Common myeloid progenitor, CD34-positive (primary cell): ENCODE measurements at regions of chr9 and their contacts with region 1.

Region 1: DNA sequence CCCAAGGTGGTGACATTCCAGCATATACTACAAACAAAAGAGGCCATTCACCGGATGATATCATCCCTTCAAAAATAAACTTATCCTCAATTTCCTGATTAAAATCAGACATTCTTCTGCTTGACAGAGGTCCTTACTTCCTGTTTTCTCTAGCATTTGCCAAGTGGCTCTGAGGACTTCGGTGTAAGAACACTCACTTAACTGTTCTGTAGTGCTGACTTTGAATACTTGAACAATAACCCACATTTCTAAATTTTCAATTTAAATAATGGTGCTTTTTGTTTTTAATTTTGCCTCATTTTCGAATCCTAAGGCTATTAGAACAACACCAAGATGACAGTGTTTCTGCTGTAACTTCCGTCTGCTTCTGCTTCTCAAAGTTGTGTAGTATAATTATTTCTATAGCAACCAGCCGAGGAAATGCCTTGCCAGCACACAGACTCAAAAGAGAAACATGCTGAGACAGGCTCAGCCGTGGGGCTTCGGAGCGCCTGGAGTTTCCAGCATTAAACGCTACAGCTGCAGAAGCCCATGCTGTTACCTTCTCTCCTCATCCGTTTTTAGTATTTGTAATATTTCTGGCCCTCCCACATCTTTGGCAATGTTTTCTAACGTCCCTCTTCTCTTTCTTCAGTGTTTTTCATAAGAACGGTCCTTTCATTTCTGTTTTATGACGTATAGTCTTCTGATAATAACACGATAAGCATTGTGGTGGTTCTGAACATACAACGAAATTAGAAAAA is 19.5 kb upstream of the ANXA1 start:
- DNase-seq: peak; percentile 88 to 96 (median 94)
- H3K4me3 ChIP-seq: peak overlapping the region in 6 of 7 experiments; percentile 72 to 90 (median 78)
- H3K27ac ChIP-seq: peak overlapping the region; percentile 98 to 99
- H3K4me1 ChIP-seq: peaks cover 6 to 18% (median 15%) of the 10 kb centered on the region in 4 experiments
- H3K27me3 ChIP-seq: no peaks in the 10 kb centered on the region

Region 2: GRCh38 chr9:73067074-73067473 is 65.1 kb before region 1 on chr9:
- CTCF ChIA-PET with region 1: no interaction called
- POLR2A ChIA-PET with region 1: no interaction called
- DNase-seq: peak in 1 of 3 donors; percentile 9
- H3K4me3 ChIP-seq: no peak overlapping the region
- H3K27ac ChIP-seq: no peak overlapping the region
- H3K4me1 ChIP-seq: no peaks in the 10 kb centered on the region
- H3K27me3 ChIP-seq: no peaks in the 10 kb centered on the region

Region 3: DNA sequence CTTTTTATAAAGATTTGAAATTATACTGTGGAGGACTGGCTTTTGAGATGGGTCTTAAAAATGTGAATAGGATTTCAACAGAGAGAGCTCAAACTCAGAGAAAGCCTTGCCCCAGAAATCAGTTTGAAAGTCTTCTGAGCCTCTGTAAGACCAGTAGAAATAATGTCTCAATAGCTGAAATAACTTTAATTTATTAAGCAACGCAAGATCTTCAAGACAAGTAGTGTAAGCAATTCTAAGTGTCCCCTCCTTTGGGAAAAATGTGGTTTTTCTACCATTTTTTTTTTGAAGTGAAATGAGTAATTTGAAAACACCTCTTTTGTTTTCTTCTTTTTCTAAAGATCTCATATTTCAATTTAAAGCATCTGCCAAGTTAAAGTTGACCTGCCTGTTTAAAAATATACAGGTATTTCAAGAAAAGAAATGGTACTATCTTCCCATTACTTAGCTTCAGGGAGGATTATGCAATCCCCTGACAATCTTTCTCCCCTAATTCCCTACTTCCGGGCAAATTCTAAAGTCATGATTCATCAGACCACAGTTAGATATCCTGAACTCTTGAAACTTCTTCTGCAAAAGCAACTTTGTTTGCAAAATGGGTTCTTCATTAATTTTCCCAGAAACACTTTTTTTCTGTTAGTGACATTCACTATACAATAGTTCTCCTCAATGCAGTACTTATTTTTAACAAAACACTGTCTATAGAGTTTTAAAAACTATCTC is 11.6 kb after region 1 on chr9:
- CTCF ChIA-PET with region 1: interaction called, 12 read pairs
- POLR2A ChIA-PET with region 1: interaction called, 3 read pairs
- DNase-seq: peak; percentile 57 to 73 (median 64)
- H3K4me3 ChIP-seq: peak overlapping the region in 1 of 7 experiments; percentile 17
- H3K27ac ChIP-seq: peak overlapping the region in 1 of 2 experiments; percentile 52
- H3K4me1 ChIP-seq: peaks cover 14 to 48% (median 28%) of the 10 kb centered on the region in 4 experiments
- H3K27me3 ChIP-seq: no peaks in the 10 kb centered on the region

Region 4: DNA sequence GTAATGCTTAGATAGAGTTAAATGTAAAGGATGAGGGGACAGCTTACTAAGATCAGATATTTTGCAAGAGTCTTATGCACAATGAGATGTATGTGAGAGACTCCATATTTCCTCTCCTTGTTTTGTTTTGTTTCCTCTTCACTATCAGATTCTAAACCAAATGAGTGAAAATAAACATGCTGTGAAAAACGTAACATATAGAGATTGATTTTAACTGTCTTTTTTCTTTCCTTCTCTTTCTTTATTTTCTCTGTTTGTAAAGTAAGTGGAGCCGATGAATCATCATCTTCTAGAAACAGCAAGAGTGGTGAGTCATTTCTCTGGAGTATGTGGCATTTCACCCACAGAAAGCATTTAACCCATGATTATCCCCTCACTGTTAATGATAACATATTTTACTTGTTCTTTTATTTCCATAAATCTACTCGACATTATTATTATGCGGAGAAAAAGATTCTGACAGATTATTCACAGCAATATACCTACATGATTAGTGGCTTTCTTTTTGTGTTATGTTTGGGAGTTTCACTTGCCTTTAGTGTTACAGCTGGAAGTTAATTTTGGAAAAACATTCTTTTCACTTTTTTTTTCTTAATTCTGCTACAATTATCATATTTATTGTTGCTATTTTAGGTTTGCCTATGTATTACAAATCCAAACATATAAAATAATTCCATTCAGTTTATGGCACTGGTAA is 17.3 kb after region 1 on chr9:
- CTCF ChIA-PET with region 1: interaction called, 12 read pairs
- POLR2A ChIA-PET with region 1: no interaction called
- DNase-seq: peak; percentile 80 to 96 (median 93)
- H3K4me3 ChIP-seq: peak overlapping the region in 3 of 7 experiments; percentile 17 to 53 (median 24)
- H3K27ac ChIP-seq: peak overlapping the region; percentile 70 to 95
- H3K4me1 ChIP-seq: peaks cover 22 to 79% (median 55%) of the 10 kb centered on the region in 4 experiments
- H3K27me3 ChIP-seq: no peaks in the 10 kb centered on the region

Region 5: DNA sequence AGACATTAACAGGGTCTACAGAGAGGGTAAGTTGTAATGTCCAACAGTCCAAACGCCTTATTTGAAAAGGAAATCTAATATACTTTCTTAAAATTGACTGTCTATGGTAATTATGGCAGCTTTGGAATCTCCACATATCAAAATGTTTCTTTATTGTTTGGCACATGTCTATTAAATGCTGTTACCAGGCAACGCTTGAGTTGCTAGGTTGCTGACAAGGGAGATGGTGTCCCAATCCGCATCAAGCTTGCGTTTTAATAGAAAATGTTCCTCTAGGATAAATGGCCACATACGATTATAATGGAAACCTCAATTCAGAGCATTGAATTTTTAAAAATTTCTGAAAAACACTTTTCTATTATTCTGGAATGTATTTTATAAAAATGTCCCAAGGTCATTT is 28.7 kb after region 1 on chr9:
- CTCF ChIA-PET with region 1: no interaction called
- POLR2A ChIA-PET with region 1: no interaction called
- DNase-seq: no peak
- H3K4me3 ChIP-seq: no peak overlapping the region
- H3K27ac ChIP-seq: no peak overlapping the region
- H3K4me1 ChIP-seq: peaks cover 9 to 23% (median 10%) of the 10 kb centered on the region in 4 experiments
- H3K27me3 ChIP-seq: no peaks in the 10 kb centered on the region

Region 6: GRCh38 chr9:73348471-73348870 is 216.3 kb after region 1 on chr9:
- CTCF ChIA-PET with region 1: no interaction called
- POLR2A ChIA-PET with region 1: no interaction called
- DNase-seq: no peak
- H3K4me3 ChIP-seq: no peak overlapping the region
- H3K27ac ChIP-seq: no peak overlapping the region
- H3K4me1 ChIP-seq: no peaks in the 10 kb centered on the region
- H3K27me3 ChIP-seq: no peaks in the 10 kb centered on the region

Region 7: GRCh38 chr9:73515216-73515615 is 383.0 kb after region 1 on chr9:
- CTCF ChIA-PET with region 1: no interaction called
- POLR2A ChIA-PET with region 1: no interaction called
- DNase-seq: no peak
- H3K4me3 ChIP-seq: no peak overlapping the region
- H3K27ac ChIP-seq: no peak overlapping the region
- H3K4me1 ChIP-seq: no peaks in the 10 kb centered on the region
- H3K27me3 ChIP-seq: no peaks in the 10 kb centered on the region